ENCODE measurements at regions of chr1 and their contacts with region 1.

Region 1: GRCh38 chr1:6884652-6885153 is 99.4 kb downstream of the CAMTA1 start:
- DNase-seq: no peak
- ATAC-seq: no peak
- H3K4me3 ChIP-seq: no peak overlapping the region
- H3K4me3 Mint-ChIP-seq: no peak overlapping the region
- H3K27ac ChIP-seq: no peak overlapping the region
- H3K27ac Mint-ChIP-seq: no peak overlapping the region
- H3K4me1 ChIP-seq: no peaks in the 10 kb centered on the region
- H3K4me1 Mint-ChIP-seq: no peaks in the 10 kb centered on the region
- H3K27me3 ChIP-seq: no peaks in the 10 kb centered on the region
- H3K27me3 Mint-ChIP-seq: no peaks in the 10 kb centered on the region
- CTCF ChIP-seq: no peak

Region 2: DNA sequence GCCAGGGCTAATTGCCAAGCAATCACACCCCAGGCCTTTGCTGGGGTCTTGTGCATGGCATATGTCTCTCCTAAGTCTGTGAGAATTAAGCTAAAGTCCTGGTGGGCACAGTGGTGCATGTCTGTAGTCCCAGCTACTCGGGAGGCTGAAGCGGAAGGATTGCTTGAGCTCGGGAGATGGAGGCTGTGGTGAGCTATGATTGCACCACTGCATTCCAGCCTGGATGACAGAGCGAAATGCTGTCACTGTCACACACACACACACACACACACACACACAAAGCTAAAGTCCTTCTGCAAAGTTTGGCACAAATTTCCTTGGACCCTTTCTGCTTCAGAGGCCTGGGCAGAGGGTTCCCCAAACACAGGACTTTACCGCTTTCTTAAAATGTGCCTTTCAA is 151.8 kb before region 1 on chr1:
- CTCF ChIA-PET with region 1: no interaction called
- POLR2A ChIA-PET with region 1: no interaction called
- intact Hi-C with region 1: loop called in 1 of 2 experiments (anchors 2 kb)
- DNase-seq: no peak
- ATAC-seq: no peak
- H3K4me3 ChIP-seq: no peak overlapping the region
- H3K4me3 Mint-ChIP-seq: no peak overlapping the region
- H3K27ac ChIP-seq: no peak overlapping the region
- H3K27ac Mint-ChIP-seq: no peak overlapping the region
- H3K4me1 ChIP-seq: no peaks in the 10 kb centered on the region
- H3K4me1 Mint-ChIP-seq: peaks cover 10% of the 10 kb centered on the region
- H3K27me3 ChIP-seq: peaks cover 0 to 3% of the 10 kb centered on the region in 2 experiments
- H3K27me3 Mint-ChIP-seq: peaks cover 14% of the 10 kb centered on the region
- CTCF ChIP-seq: no peak

Measured in CD4-positive, alpha-beta T cell (primary cell).